Activated CD4-positive, alpha-beta memory T cell treated with anti-CD3 and anti-CD28 coated beads for 36 hours (primary cell): ENCODE measurements at regions of chr1 and their contacts with region 1.

Region 1: DNA sequence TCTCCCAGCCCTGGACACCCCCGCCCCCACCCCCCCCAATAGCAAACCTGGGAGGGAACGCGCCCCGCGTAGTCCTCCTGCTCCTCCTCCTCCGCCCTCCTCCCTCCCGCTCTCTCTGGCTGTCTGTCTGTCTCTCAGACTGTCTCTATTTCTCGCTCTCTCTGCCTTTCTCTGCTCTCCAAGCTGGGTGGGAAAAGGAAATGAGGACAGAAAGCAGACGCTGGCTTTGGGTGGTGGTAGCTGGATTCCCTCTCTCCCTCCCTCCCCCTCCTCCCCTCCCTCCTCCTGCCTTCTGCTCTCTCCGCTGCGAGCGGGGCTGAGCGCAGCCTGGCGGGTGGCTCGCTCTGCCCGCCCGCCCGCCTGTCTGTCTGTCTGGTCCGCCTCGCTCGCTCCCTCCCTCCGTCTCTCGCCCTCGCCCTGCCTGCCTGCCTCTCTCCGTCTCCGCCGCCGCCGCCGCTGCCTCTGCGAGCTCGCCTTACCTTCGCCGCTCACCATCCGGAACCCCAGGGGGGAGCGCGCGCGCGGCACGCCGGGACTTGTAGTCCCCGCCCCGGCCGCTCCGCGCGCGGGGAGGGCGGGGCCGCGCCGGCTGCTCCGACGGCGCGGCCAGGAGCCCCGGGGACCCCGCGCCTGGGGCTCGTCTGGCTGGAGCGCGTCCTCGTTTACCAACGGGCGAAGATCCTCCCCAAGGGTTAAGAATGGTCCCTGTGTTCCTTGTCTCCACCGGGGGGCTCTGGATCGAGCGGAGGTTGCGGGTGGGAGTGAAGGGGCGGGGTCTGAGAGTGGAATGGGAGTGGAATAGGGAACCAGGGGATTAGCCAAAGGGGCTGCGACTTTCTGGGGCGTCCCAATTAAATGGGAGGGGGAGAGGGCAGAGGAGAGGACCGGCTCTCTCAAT is at the start of gene AHDC1:
- DNase-seq: peak; percentile 93
- H3K4me3 Mint-ChIP-seq: peak within 1 kb of the TSS; percentile 82
- H3K27ac Mint-ChIP-seq: peak within 1 kb of the TSS; percentile 44
- H3K4me1 Mint-ChIP-seq: peaks cover 39% of the 10 kb centered on the region
- H3K27me3 Mint-ChIP-seq: no peaks in the 10 kb centered on the region
- total RNA-seq, gene AHDC1: 8.3 to 12.1 TPM

Region 2: GRCh38 chr1:27300341-27301051 is 303.4 kb before region 1 on chr1:
- CTCF ChIA-PET with region 1: interaction called, 94 read pairs
- POLR2A ChIA-PET with region 1: interaction called, 4 read pairs
- intact Hi-C with region 1: loop called (anchors 2 kb)
- DNase-seq: peak; percentile 83
- H3K4me3 Mint-ChIP-seq: no peak overlapping the region
- H3K27ac Mint-ChIP-seq: no peak overlapping the region
- H3K4me1 Mint-ChIP-seq: no peaks in the 10 kb centered on the region
- H3K27me3 Mint-ChIP-seq: no peaks in the 10 kb centered on the region

Region 3: DNA sequence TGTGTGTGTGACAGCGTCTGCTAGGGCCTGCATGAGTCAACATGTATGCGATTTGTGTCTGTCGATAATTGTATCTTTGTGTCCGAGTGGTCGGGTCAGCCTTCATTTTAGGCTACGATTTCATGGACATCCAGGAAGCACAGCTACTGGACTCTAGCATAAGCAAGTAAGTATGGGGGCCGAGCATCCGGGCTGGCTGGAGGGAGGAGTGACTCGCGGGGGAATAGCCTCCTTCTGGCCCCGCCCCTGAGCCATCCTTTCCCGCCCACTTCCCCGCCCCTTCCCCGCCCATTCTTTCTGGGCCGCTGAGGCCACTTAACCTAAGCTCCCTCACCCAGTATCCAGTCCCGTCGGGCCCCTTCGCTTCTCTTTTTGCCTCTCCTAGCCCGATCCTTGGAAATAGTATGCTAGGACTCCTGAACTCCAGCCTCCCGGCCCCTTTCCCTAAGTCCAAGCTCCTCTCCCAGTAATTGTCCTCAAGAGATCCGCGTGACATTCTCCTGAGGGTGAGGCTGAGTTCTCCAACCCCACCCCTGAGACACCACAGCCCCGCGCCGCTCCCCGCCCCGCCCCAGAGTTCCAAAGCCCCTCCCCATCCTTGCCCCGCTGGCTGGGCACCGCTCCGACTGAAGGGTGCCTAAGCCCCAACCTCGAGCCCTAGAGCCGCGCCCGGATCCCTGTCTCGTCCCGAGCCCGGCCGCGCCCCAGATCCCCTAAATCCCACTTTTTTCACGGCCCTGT is 238.4 kb before region 1 on chr1:
- CTCF ChIA-PET with region 1: interaction called, 41 read pairs
- POLR2A ChIA-PET with region 1: no interaction called
- intact Hi-C with region 1: no loop called
- DNase-seq: peak; percentile 92
- H3K4me3 Mint-ChIP-seq: peak overlapping the region; percentile 85
- H3K27ac Mint-ChIP-seq: peak overlapping the region; percentile 66
- H3K4me1 Mint-ChIP-seq: peaks cover 18% of the 10 kb centered on the region
- H3K27me3 Mint-ChIP-seq: no peaks in the 10 kb centered on the region

Region 4: GRCh38 chr1:27525296-27526272 is 78.3 kb before region 1 on chr1:
- CTCF ChIA-PET with region 1: interaction called, 21 read pairs
- POLR2A ChIA-PET with region 1: interaction called, 7 read pairs
- intact Hi-C with region 1: loop called (anchors 1 kb)
- DNase-seq: peak; percentile 80
- H3K4me3 Mint-ChIP-seq: peak overlapping the region; percentile 62
- H3K27ac Mint-ChIP-seq: peak overlapping the region; percentile 7
- H3K4me1 Mint-ChIP-seq: peaks cover 57% of the 10 kb centered on the region
- H3K27me3 Mint-ChIP-seq: no peaks in the 10 kb centered on the region

Region 5: DNA sequence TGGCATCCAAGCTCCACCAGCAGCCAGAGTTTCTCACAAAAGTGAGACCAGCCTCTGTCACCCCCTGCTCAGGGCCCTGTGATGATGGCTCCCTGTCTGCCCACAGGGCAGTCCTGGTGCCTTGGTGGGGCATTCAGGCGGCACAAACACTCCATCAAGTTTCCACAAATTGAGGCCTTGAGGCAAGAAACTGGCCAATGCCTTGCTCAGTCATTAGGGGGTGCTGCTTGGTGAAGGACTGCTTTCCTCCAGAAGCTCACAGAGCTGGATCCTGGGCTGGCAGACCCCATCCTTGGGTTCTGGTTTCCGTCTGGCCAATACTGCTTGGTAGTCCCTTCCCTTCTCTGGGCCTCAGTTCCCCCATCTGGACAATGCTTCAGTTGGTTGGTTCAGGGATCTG is 12.5 kb after region 1 on chr1:
- CTCF ChIA-PET with region 1: interaction called, 34 read pairs
- POLR2A ChIA-PET with region 1: no interaction called
- intact Hi-C with region 1: no loop called
- DNase-seq: no peak
- H3K4me3 Mint-ChIP-seq: no peak overlapping the region
- H3K27ac Mint-ChIP-seq: no peak overlapping the region
- H3K4me1 Mint-ChIP-seq: peaks cover 37% of the 10 kb centered on the region
- H3K27me3 Mint-ChIP-seq: no peaks in the 10 kb centered on the region

Region 6: GRCh38 chr1:27671964-27672749 is 68.2 kb after region 1 on chr1 and contains the start of gene IFI6:
- CTCF ChIA-PET with region 1: interaction called, 55 read pairs
- POLR2A ChIA-PET with region 1: no interaction called
- intact Hi-C with region 1: no loop called
- DNase-seq: peak; percentile 89
- H3K4me3 Mint-ChIP-seq: peak within 1 kb of the TSS; percentile 91
- H3K27ac Mint-ChIP-seq: peak within 1 kb of the TSS; percentile 84
- H3K4me1 Mint-ChIP-seq: peaks cover 29% of the 10 kb centered on the region
- H3K27me3 Mint-ChIP-seq: no peaks in the 10 kb centered on the region
- total RNA-seq, gene IFI6: 76.4 TPM

Region 7: DNA sequence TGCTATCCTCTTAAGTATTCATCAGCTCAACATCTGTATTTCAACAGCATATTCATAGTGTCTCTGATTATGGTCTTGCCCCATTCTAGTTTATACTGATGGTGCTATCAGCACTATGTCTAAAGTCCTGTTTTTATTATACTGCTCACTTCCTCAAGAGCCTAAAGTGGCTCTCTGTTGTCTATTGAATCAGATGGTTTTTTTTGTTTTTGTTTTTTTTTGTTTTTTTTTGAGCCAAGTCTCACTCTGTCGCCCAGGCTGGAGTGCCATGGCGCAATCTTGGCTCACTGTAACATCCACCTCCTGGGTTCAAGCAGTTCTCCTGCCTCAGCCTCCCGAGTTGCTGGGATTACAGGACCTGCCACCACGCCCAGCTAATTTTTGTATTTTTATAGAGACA is 175.2 kb after region 1 on chr1:
- CTCF ChIA-PET with region 1: no interaction called
- POLR2A ChIA-PET with region 1: no interaction called
- intact Hi-C with region 1: no loop called
- DNase-seq: no peak
- H3K4me3 Mint-ChIP-seq: no peak overlapping the region
- H3K27ac Mint-ChIP-seq: no peak overlapping the region
- H3K4me1 Mint-ChIP-seq: peaks cover 30% of the 10 kb centered on the region
- H3K27me3 Mint-ChIP-seq: no peaks in the 10 kb centered on the region